ENCODE measurements at regions of chr20 and their contacts with region 1.

Region 1: GRCh38 chr20:47453142-47453782 is 48.4 kb upstream of the NCOA3 start:
- DNase-seq: peak; percentile 92
- H3K4me3 Mint-ChIP-seq: peak overlapping the region; percentile 45
- H3K27ac Mint-ChIP-seq: peak overlapping the region; percentile 91
- H3K4me1 Mint-ChIP-seq: peaks cover 27% of the 10 kb centered on the region
- H3K27me3 Mint-ChIP-seq: no peaks in the 10 kb centered on the region
- CTCF ChIP-seq: no peak

Region 2: DNA sequence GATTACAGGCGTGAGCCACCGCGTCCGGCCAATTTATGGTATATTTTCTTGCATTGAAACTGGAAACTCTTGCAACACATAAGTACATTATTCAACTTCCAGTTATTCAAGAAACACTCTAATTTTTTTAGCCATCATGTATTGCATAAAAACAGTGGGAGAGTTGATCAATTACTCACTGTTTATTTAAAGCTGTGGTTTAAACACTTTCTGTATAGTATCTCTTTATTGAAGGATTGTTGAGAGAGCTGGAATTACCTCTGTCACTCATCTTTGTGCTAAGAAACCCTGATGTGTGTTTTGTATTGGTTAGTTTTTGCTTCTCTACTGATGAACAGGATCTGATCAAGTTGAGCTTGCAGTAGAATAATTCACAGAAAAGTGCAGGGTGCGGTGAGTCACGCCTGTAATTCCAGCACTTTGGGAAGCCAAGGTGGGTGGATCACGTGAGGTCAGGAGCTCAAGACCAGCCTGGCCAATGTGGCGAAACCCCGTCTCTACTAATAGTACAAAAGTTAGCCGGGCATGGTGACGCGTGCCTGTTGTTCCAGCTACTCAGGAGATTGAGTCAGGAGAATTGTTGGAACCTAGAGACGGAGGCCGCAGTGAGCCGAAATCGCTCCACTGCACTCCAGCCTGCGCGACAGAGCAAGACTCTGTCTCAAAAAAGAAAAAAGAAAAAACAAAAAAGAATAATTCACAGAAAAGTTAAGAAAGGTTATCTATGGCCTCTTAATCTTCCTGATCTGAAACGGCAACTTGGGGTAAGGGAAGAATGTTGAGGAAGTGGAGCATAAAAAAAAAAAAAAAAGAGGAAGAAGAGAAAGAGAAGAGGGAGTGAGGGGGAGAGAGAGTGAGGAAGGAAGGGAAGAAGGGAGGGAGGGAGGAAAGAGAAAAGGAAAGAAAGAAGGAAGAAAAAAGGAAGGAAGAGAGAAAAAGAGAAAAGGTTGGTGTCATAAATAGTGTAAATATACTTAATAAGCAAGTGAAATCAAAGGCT is 20.8 kb before region 1 on chr20:
- CTCF ChIA-PET with region 1: interaction called, 7 read pairs
- POLR2A ChIA-PET with region 1: interaction called, 276 read pairs
- intact Hi-C with region 1: loop called (anchors 2 kb)
- DNase-seq: peak; percentile 94
- H3K4me3 Mint-ChIP-seq: peak overlapping the region; percentile 66
- H3K27ac Mint-ChIP-seq: peak overlapping the region; percentile 99
- H3K4me1 Mint-ChIP-seq: peaks cover 27% of the 10 kb centered on the region
- H3K27me3 Mint-ChIP-seq: no peaks in the 10 kb centered on the region
- CTCF ChIP-seq: no peak

Region 3: GRCh38 chr20:47441774-47442150 is 11.5 kb before region 1 on chr20:
- CTCF ChIA-PET with region 1: interaction called, 9 read pairs
- POLR2A ChIA-PET with region 1: interaction called, 276 read pairs
- intact Hi-C with region 1: no loop called
- DNase-seq: no peak
- H3K4me3 Mint-ChIP-seq: no peak overlapping the region
- H3K27ac Mint-ChIP-seq: no peak overlapping the region
- H3K4me1 Mint-ChIP-seq: peaks cover 6% of the 10 kb centered on the region
- H3K27me3 Mint-ChIP-seq: no peaks in the 10 kb centered on the region
- CTCF ChIP-seq: no peak

Measured in MCF 10A (cell line).